Sigmoid colon (tissue), 7 donors: ENCODE measurements at regions of chr22 and their contacts with region 1.

Region 1: DNA sequence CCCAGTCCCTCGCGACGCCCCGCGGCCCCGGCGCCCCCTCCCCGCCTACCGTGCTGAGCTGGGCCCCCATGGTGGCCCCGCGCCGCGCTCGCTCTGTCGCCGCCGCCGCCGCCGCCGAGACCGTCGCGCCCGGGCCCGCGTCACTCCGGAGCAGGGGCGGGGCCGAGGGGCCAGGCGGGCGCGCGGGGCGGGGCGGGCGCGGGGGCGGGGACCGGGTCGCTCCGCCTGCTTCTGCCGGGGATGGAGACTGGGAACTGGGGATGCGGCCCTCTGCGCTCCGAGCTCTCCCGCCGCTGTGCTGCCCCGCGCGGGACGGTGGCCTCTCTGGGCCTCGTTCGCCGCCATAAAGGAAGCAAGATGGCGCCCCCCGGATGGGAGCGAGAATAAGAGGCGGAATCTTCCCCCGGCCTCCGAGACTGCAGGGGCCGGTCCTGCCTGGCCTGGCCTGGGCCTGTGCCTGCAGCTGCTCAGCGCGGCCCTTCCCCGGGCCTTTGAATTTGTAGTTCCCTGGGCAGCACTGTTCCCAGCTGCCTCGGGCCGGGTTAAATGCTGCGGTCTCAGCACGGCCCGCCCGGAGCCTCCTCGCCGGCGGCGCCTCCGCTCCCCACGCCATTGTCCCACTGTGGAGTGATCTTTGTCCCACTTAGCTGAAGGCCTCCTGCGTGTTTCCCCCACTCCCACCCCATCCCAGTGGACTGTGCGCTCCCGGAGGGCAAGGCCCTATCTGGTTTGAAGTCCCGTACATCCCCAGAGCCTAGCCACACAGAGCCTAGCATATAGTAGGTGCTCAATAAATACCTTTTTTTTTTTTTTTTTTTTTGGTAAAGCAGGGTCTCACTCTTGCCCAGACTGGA is at the start of gene CYB5R3:
- DNase-seq: peak; percentile 92
- H3K4me3 ChIP-seq: peak within 1 kb of the TSS; percentile 95 to 99 (median 97)
- H3K27ac ChIP-seq: peak within 1 kb of the TSS; percentile 95 to 98 (median 96)
- H3K4me1 ChIP-seq: peaks cover 0 to 49% (median 43%) of the 10 kb centered on the region in 4 donors
- H3K27me3 ChIP-seq: no peaks in the 10 kb centered on the region
- CTCF ChIP-seq: no peak
- EP300 ChIP-seq: no peak
- POLR2A ChIP-seq: peak; percentile 31 to 47
- total RNA-seq, gene CYB5R3: 71.5 to 156 (median 88.6) TPM

Region 2: GRCh38 chr22:42621505-42622002 is 27.9 kb before region 1 on chr22:
- intact Hi-C with region 1: loop called (anchors 2 kb)
- DNase-seq: no peak
- H3K4me3 ChIP-seq: no peak overlapping the region
- H3K27ac ChIP-seq: peak overlapping the region; percentile 73 to 80 (median 78)
- H3K4me1 ChIP-seq: peaks cover 0 to 45% (median 34%) of the 10 kb centered on the region in 4 donors
- H3K27me3 ChIP-seq: no peaks in the 10 kb centered on the region
- CTCF ChIP-seq: peak; percentile 63 to 89 (median 86)
- EP300 ChIP-seq: no peak
- POLR2A ChIP-seq: no peak

Region 3: DNA sequence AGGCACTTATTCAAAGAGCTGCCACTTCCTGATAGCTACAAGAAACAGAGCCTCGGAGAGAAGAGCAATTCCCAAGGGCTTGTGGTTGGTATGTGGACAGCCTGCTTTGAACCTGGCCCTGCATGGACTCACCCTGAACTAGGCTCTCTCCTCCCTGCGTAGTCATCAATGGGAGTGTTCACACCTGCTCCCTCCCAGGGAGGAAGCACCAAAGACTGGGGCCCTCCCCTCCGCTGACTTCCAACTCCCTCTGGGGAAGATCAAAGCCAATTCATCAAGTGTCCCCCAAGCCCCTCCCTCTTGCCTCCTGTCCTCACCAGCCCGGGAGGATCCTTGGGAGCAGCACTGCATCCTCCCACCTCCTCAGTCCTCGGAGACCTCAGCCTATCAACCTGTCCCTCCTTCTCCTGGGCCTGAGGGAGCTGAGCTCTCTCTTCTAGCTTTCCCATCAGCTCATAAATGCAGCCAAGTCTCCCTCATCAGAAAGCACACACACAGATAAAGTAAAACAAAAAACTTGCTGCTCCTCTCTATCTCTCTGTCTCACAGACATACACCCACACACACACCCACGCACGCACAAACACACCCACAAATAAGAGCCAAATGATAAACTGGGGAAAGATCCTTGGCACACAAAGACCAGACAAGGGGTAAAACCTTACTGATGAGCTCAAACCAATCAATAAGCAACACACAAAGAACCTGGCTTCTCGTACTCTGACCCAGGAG is 67.9 kb after region 1 on chr22:
- intact Hi-C with region 1: no loop called
- DNase-seq: no peak
- H3K4me3 ChIP-seq: no peak overlapping the region
- H3K27ac ChIP-seq: peak overlapping the region; percentile 95 to 96 (median 96)
- H3K4me1 ChIP-seq: peaks cover 0 to 55% (median 50%) of the 10 kb centered on the region in 4 donors
- H3K27me3 ChIP-seq: peaks cover 0 to 7% (median 0%) of the 10 kb centered on the region in 3 donors
- CTCF ChIP-seq: no peak
- EP300 ChIP-seq: no peak
- POLR2A ChIP-seq: no peak

Region 4: GRCh38 chr22:42856865-42857704 is 207.6 kb after region 1 on chr22 and contains the start of gene ARFGAP3:
- intact Hi-C with region 1: loop called (anchors 10 kb)
- DNase-seq: peak; percentile 97
- H3K4me3 ChIP-seq: peak within 1 kb of the TSS; percentile 68 to 95 (median 78)
- H3K27ac ChIP-seq: peak within 1 kb of the TSS; percentile 90 to 98 (median 94)
- H3K4me1 ChIP-seq: peaks cover 0 to 29% (median 17%) of the 10 kb centered on the region in 4 donors
- H3K27me3 ChIP-seq: no peaks in the 10 kb centered on the region
- CTCF ChIP-seq: no peak
- EP300 ChIP-seq: no peak
- POLR2A ChIP-seq: peak; percentile 63 to 72
- total RNA-seq, gene ARFGAP3: 35.7 to 45.3 (median 40.5) TPM

Region 5: DNA sequence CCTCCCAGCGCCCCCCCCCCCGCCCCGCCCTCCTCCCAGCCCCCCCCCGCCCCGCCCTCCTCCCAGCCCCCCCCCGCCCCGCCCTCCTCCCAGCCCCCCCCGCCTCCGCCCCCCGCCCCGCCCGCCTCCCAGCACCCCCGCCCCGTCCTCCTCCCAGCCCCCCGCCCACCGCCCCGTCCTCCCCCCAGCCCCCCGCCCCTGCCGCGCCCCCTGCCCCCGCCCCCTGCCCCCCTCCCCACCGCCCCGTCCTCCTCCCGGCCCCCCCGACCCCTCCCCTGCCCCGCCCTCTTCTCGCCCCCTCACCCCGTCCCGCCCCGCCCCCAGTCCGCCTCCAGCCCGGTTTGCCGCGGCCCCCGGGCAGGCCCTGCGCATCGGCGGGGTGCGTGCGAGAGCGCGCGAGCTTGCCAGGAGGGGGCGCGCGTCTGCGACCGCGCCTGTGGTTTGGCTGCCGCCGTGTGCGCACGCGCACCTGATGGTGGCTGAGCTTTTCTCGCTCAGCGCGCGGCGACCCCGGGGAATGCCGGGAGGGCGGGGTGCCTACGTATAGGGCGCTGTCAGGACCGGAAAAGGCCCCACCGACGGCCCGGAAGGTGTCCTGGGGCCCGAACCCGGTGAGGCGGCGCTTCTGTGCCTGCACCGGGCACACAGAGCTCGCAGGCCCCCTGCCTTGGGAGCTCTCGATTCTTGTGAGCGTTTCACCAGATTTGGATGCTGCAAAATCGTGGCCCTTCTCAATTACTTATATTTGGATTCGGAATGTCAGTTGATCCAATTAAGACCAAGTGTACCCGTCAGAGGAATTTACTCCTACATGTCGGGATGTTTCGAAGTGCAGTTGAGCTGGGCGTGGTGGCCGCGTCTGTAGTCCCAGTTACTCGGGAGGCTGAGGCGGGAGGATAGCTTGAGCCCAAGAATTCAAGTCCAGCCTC is 538.0 kb after region 1 on chr22:
- intact Hi-C with region 1: loop called (anchors 5 kb)
- DNase-seq: peak; percentile 97
- H3K4me3 ChIP-seq: peak overlapping the region; percentile 24 to 86 (median 76)
- H3K27ac ChIP-seq: peak overlapping the region; percentile 84 to 93 (median 86)
- H3K4me1 ChIP-seq: peaks cover 0 to 23% (median 16%) of the 10 kb centered on the region in 4 donors
- H3K27me3 ChIP-seq: no peaks in the 10 kb centered on the region
- CTCF ChIP-seq: peak in 2 of 4 experiments; percentile 25 to 67
- EP300 ChIP-seq: peak in 1 of 4 donors; percentile 51
- POLR2A ChIP-seq: peak in 1 of 2 donors; percentile 47